ENCODE measurements at regions of chr10 and their contacts with region 1.

Region 1: DNA sequence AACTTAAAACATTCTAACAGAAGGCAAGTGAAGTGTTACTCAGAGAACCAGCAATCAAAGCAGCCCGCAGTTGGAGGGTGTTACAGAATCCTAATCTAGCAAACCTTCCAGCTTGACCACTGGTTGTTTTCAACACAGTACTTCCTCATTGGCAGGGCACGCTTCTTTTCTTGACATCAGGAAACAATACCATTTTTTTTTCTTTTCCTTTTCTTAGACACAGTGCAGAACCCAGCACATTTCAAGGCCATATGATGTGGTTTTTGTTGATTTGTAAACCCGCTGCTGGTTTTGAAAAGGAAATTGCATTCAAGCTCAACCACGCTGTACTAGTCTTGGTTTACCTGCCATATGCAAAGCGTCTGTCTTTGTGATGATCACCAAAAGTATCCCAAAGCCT is 33.4 kb downstream of the RHOBTB1 start:
- DNase-seq: peak in 1 of 2 donors; percentile 68
- H3K4me3 ChIP-seq: peak overlapping the region; percentile 3 to 25
- H3K27ac ChIP-seq: peak overlapping the region; percentile 50 to 69
- H3K4me1 ChIP-seq: peaks cover 8 to 26% of the 10 kb centered on the region in 2 donors
- H3K27me3 ChIP-seq: no peaks in the 10 kb centered on the region
- CTCF ChIP-seq: no peak

Region 2: GRCh38 chr10:60937784-60938654 is 27.5 kb after region 1 on chr10:
- intact Hi-C with region 1: loop called (anchors 2 kb)
- DNase-seq: peak; percentile 10 to 82
- H3K4me3 ChIP-seq: no peak overlapping the region
- H3K27ac ChIP-seq: peak overlapping the region; percentile 64 to 100
- H3K4me1 ChIP-seq: peaks cover 0 to 24% of the 10 kb centered on the region in 2 donors
- H3K27me3 ChIP-seq: no peaks in the 10 kb centered on the region
- CTCF ChIP-seq: no peak

Region 3: GRCh38 chr10:61024856-61025600 is 114.5 kb after region 1 on chr10:
- intact Hi-C with region 1: no loop called
- DNase-seq: no peak
- H3K4me3 ChIP-seq: no peak overlapping the region
- H3K27ac ChIP-seq: no peak overlapping the region
- H3K4me1 ChIP-seq: no peaks in the 10 kb centered on the region
- H3K27me3 ChIP-seq: no peaks in the 10 kb centered on the region
- CTCF ChIP-seq: peak in 1 of 3 experiments; percentile 32

Measured in ascending aorta (tissue), 2 donors.